Activated naive CD8-positive, alpha-beta T cell treated with anti-CD3 and anti-CD28 coated beads, Interleukin-2, amount 10 ng/mL, durations not matched to agents 7 days and 5 days (primary cell): ENCODE measurements at regions of chr17 and their contacts with region 1.

Region 1: DNA sequence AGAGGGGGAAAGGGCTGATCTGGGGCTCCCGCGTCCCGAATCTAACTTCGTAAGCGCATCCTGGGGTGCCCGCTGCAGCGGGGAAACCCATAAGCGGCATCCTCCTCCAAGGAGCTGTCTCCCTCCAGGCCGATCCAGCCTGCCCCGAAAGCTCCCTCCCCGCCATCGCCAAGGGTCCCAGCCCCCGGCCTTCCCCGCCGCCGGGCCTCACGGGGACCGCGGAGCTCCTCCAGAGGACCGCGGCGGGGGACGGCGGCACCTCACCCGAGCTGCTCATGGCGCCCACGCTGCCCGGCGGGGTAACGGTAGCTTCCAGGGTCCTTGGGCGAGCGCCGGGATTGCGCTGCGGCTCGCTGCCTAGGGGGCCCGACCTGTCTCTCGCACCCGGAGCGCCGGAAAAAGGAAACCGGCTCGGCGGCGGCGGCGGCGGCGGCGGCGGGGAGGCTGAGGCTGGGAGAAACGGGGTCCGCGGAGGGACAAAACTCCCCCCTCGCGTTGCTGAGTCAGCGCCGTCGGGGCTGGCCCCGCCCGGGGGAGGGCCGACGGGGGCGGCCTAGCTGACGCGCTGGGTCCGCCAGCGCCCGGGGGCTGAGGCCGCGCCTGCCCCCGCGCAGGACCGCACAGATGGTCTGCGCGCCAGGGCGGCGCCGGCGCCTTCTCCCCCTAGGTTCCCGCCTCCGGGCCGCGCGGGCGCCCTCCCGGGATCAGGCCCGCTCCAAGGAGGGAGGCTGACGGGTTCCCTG is at the start of gene BLMH:
- DNase-seq: peak; percentile 92
- ATAC-seq: peak; percentile 90
- H3K4me3 Mint-ChIP-seq: peak within 1 kb of the TSS; percentile 94
- H3K27ac Mint-ChIP-seq: peak within 1 kb of the TSS; percentile 88
- H3K4me1 Mint-ChIP-seq: peaks cover 16% of the 10 kb centered on the region
- H3K27me3 Mint-ChIP-seq: no peaks in the 10 kb centered on the region
- total RNA-seq, gene BLMH: 61.8 to 64.1 TPM

Region 2: GRCh38 chr17:30336369-30337171 is 44.9 kb after region 1 on chr17:
- POLR2A ChIA-PET with region 1: interaction called, 11 read pairs
- DNase-seq: no peak
- ATAC-seq: peak; percentile 32
- H3K4me3 Mint-ChIP-seq: no peak overlapping the region
- H3K27ac Mint-ChIP-seq: no peak overlapping the region
- H3K4me1 Mint-ChIP-seq: peaks cover 32% of the 10 kb centered on the region
- H3K27me3 Mint-ChIP-seq: peaks cover 5% of the 10 kb centered on the region